Mucosa of descending colon (tissue), 3 donors: ENCODE measurements at regions of chr5 and their contacts with region 1.

Region 1: GRCh38 chr5:64625678-64626077 is 64.6 kb upstream of the SHISAL2B start:
- DNase-seq: no peak
- ATAC-seq: no peak
- H3K4me3 ChIP-seq: no peak overlapping the region
- H3K4me1 ChIP-seq: no peaks in the 10 kb centered on the region
- CTCF ChIP-seq: no peak

Region 2: GRCh38 chr5:63963080-63963735 is 662.5 kb before region 1 on chr5:
- intact Hi-C with region 1: no loop called
- DNase-seq: peak in 1 of 3 donors; percentile 81
- ATAC-seq: peak; percentile 63
- H3K4me3 ChIP-seq: no peak overlapping the region
- H3K4me1 ChIP-seq: no peaks in the 10 kb centered on the region
- CTCF ChIP-seq: no peak

Region 3: DNA sequence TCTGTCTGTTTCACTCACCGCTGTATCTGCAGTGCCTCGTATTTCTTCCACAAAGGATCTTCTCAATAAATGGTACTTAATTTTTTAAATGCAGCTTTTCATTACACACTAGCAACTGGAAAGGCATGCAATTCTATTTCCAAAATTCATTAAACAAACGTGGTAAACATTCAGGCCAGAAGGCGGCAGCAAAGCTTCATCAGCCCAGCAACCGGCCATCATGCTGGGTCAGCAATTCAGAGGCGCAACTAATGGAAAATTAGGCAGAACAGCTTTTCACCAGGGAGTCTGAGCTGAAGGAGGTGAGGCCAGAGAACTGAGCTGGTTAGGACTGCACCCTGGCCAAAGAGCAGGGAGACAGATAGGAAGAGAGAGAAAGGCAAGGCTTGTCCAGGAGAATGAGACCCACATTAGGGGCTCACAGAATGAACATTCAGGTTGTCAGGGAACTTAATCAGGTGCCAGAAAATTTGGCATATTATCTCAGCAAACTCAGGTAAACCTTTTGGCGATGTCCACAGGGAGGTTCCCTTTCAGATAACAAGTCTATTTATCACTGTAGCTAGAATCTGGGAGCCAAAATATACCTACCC is 477.7 kb before region 1 on chr5:
- intact Hi-C with region 1: loop called in 1 of 2 experiments (anchors 10 kb)
- DNase-seq: peak in 2 of 3 donors; percentile 37 to 63
- ATAC-seq: peak; percentile 36
- H3K4me3 ChIP-seq: no peak overlapping the region
- H3K4me1 ChIP-seq: no peaks in the 10 kb centered on the region
- CTCF ChIP-seq: peak; percentile 21